ENCODE measurements at regions of chr22 and their contacts with region 1.

Region 1: DNA sequence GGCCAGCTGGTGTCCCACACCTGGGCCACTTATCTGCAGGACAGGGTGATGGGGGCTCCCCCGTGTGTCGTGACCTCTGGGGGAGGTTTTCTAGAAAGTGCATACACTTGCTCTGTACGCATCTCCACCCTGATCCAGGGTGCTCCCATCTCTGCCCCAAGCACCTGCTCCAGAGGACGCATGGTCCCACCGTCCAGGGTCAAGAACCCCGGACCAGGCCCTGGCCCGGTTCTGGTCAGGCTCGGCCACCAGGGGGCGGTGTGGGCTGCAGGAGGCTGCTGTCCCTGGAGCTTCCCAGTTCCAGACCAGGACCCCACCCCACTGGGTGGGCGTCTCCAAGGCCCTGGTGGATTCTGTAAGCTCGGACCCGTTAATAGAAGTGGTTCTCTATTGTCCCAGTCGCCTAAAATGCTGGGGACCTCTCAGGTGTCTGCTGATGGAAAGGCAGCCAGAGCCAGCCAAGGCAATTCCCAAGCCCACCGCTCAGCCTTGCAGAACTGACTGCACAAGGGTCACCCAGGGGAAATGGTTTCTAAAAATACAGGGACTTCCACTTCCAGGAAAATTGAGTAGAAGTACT is 34.7 kb upstream of the SEPTIN5 start:
- DNase-seq: peak; percentile 67 to 88
- ATAC-seq: peak; percentile 89
- H3K4me3 ChIP-seq: no peak overlapping the region
- H3K27ac ChIP-seq: no peak overlapping the region
- H3K4me1 ChIP-seq: no peaks in the 10 kb centered on the region
- H3K27me3 ChIP-seq: no peaks in the 10 kb centered on the region

Region 2: DNA sequence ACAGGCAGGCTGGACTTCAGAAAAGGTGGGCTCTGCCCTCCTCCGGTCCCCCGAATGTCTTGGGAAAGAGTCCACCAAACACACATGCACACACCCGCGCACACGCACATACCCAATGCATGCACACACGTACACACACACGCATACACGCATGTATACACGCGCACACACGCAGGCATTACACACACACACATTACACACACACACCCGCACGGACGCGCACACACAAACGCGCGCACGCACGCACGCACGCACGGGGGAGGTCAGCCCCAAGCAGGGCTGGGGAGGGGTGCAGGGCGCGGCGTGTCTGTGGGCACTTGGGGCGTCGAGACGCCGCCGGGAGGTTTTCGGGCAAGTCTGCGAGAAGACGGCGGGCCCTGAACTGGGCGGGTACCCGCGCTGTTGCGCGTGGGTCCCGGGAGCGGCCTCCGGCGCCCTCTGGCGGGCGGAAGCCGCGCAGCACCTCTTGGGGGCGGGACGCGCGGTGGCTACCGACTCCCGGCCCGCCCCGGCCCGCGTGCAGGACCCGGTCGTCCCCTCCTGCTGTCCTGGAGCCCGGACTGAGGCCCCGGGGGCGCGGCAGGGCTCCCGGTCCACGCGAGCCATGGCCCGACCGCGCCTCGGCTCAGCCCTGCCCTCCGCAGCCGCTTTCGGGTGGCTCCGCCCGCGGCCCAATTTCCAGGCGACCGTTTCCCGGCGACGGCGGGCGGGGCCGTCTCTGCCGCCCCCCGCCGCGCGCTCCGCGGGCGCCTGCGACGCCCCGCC is 38.3 kb after region 1 on chr22:
- intact Hi-C with region 1: loop called in 1 of 2 experiments (anchors 2 kb)
- DNase-seq: peak; percentile 85 to 95
- ATAC-seq: peak; percentile 89
- H3K4me3 ChIP-seq: peak overlapping the region; percentile 45 to 55
- H3K27ac ChIP-seq: no peak overlapping the region
- H3K4me1 ChIP-seq: no peaks in the 10 kb centered on the region
- H3K27me3 ChIP-seq: no peaks in the 10 kb centered on the region